ENCODE measurements at regions of chr15 and their contacts with region 1.

Region 1: DNA sequence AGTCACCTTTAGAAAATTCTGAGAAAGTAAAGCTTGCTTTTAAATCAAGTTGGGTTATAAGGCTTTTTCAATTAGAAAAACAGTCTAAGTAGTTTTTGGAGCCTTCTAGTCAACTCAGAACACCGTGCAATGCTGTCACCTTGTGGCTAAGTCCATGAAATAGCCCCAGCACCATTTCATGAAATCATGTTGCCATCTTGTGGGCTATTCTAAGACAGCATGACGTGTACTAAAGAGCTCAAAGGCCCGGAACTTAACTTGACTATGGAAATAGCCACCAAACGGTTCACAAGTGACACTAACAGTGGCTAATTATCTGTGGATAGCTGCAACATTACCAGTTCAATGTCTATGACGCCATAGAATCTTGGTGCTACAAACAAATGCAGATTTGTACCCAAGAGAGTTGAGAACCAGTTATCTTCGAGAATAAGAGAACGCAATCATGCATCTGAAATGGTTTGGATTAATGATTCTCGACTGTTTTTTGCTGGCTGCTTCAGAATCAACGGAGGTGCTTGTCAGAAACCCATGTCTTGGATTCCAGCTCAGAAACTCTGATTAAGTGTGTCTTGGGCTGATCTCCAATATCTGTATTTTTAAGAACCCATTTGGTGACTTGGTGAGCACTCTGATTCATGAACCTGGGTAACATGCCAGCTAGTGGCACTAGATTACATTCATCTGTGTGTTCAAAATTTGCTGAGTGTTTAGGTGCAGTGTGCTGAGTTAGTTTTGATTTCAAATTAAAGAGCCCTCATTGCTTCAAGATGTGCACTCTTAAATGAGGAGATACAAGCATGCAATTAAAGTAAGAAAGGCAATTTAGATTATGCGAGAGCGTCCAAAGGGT is 111.2 kb upstream of the MCTP2 start:
- DNase-seq: peak; percentile 84
- H3K4me3 ChIP-seq: no peak overlapping the region
- H3K27ac ChIP-seq: no peak overlapping the region
- H3K27me3 ChIP-seq: no peaks in the 10 kb centered on the region
- CTCF ChIP-seq: peak; percentile 100

Region 2: DNA sequence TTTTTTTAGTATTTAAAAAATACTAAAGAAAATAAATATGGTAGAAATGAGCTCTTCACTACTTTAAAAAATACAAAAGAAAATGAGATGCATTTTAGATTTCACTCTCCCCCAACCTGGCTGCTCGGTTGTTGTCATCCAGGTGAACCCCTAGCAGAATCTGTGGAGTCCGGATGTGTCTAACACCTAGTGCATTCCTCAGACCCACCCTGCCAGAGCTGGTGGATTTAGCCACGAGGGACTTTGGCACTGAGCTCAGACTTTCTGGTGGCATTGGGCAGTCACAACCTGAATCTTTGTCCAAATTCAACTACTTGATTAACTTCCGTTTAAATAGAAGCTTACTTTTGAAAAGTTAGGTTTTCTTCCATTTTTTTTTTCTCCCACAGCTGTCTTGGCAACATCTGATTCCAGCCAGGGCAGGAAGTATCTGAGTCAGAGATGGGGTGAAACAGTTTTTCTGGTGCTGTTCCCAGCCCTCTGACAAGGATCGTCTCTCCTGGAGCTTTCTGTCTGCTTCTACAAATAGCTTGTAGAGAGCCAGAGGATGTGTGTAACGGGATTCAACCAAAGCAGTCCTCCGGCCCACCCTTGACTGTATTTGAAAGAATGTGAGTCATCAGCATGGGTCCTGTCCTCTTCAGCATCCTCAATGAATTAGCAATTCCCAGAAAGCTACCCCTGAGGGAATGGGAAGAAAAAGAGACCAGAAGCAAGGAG is 190.6 kb before region 1 on chr15:
- CTCF ChIA-PET with region 1: interaction called, 18 read pairs
- POLR2A ChIA-PET with region 1: no interaction called
- DNase-seq: peak; percentile 82
- H3K4me3 ChIP-seq: no peak overlapping the region
- H3K27ac ChIP-seq: peak overlapping the region; percentile 47
- H3K27me3 ChIP-seq: no peaks in the 10 kb centered on the region
- CTCF ChIP-seq: no peak

Region 3: DNA sequence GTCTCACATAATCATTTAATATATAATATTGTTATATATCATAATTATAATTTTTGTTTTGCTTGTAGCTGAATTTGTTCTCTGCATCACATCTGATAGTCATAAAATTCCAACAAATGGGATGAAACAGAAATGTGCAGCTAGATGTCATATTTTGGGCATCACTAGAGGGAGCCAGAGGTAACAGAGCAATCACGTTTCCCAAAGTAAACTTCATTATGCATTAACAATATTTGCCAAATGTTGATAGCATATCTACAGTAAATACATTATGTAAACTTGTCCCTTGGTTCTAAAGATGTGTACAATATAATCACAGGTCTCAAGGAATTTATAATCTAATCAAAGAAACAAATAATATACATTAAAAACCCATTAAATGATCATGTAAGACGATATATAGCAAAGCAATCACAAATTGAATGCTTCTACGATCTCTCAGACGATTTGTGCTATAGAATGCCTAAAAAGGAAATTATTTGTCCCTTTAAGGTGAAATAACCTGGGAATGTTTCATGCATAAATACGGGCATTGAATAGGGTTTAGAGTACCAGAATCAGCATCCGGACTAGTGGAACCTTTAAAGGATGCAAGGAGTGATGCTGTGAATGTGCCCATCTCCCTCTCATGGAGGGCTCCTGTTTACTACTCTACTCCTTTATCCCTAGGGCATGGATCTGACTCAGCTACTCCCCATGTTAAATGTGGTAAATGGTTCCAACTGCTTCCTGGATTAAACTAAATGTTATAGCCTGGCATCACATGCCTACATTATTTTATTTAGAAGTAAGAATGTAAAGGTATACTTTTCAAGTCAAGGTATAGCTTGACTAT is 122.8 kb before region 1 on chr15:
- CTCF ChIA-PET with region 1: interaction called, 218 read pairs
- POLR2A ChIA-PET with region 1: no interaction called
- DNase-seq: peak; percentile 8
- H3K4me3 ChIP-seq: no peak overlapping the region
- H3K27ac ChIP-seq: no peak overlapping the region
- H3K27me3 ChIP-seq: no peaks in the 10 kb centered on the region
- CTCF ChIP-seq: peak; percentile 96

Region 4: GRCh38 chr15:94070356-94071295 is 49.5 kb before region 1 on chr15:
- CTCF ChIA-PET with region 1: interaction called, 22 read pairs
- POLR2A ChIA-PET with region 1: no interaction called
- DNase-seq: no peak
- H3K4me3 ChIP-seq: no peak overlapping the region
- H3K27ac ChIP-seq: no peak overlapping the region
- H3K27me3 ChIP-seq: no peaks in the 10 kb centered on the region
- CTCF ChIP-seq: no peak

Region 5: DNA sequence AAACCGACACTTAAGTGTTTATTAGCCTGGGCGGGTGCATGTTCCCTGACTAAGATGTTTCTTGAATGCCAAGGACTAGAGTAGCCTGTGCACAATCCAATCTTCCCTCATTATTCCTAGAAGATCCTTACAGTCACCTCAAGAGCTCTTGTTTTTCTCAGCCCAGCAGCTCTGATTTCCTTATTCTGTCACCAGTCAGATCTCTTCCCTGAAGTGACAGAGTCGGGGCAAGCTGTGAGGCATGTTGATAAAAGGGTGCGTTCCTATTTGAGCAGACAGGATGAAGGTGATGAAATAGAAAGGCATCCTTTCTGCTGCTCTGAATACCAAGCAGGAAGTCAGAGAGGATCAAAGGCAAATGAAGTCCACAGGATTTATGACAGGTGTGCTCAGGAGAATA is 14.4 kb before region 1 on chr15:
- CTCF ChIA-PET with region 1: interaction called, 32 read pairs
- POLR2A ChIA-PET with region 1: no interaction called
- DNase-seq: no peak
- H3K4me3 ChIP-seq: no peak overlapping the region
- H3K27ac ChIP-seq: no peak overlapping the region
- H3K27me3 ChIP-seq: no peaks in the 10 kb centered on the region
- CTCF ChIP-seq: no peak

Region 6: GRCh38 chr15:94317201-94317600 is 197.1 kb after region 1 on chr15:
- CTCF ChIA-PET with region 1: no interaction called
- POLR2A ChIA-PET with region 1: no interaction called
- DNase-seq: no peak
- H3K4me3 ChIP-seq: no peak overlapping the region
- H3K27ac ChIP-seq: no peak overlapping the region
- H3K27me3 ChIP-seq: no peaks in the 10 kb centered on the region
- CTCF ChIP-seq: no peak